Colonic mucosa (tissue), 4 donors: ENCODE measurements at regions of chr14 and their contacts with region 1.

Region 1: DNA sequence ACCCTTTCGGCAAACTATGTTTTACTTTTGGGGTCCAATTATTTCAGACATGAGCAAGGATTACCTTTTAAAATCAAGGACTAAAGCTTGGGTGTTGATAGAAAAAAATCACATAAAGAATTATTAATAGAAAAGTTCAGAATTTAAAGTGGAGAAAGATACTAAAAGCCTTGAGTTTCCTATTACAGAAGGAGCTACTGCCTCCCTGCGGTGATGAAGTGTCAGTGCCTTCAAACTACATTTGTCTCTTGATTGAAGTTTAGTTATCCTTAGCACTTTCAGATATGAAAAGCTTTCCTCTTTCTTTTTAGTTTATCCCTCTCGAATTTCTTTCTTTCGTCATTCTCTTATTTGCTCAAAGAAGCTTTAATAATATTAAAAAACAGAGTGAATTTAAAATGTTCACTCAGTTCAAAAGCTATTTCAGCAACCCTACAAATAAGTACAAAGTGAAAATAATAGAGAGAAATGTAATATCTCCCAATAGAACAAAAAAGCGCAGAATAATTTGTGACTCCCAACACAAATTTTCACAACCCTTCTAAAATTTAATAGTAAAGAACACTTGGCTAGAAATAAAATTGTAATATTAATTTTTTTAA is 87.6 kb downstream of the SEC23A start:
- DNase-seq: no peak
- H3K4me3 ChIP-seq: no peak overlapping the region
- H3K27ac ChIP-seq: no peak overlapping the region
- H3K4me1 ChIP-seq: no peaks in the 10 kb centered on the region
- H3K27me3 ChIP-seq: no peaks in the 10 kb centered on the region
- CTCF ChIP-seq: peak; percentile 74

Region 2: GRCh38 chr14:37796703-37797416 is 1218.6 kb before region 1 on chr14:
- intact Hi-C with region 1: no loop called
- DNase-seq: no peak
- H3K4me3 ChIP-seq: no peak overlapping the region
- H3K27ac ChIP-seq: no peak overlapping the region
- H3K4me1 ChIP-seq: no peaks in the 10 kb centered on the region
- H3K27me3 ChIP-seq: no peaks in the 10 kb centered on the region
- CTCF ChIP-seq: no peak

Region 3: DNA sequence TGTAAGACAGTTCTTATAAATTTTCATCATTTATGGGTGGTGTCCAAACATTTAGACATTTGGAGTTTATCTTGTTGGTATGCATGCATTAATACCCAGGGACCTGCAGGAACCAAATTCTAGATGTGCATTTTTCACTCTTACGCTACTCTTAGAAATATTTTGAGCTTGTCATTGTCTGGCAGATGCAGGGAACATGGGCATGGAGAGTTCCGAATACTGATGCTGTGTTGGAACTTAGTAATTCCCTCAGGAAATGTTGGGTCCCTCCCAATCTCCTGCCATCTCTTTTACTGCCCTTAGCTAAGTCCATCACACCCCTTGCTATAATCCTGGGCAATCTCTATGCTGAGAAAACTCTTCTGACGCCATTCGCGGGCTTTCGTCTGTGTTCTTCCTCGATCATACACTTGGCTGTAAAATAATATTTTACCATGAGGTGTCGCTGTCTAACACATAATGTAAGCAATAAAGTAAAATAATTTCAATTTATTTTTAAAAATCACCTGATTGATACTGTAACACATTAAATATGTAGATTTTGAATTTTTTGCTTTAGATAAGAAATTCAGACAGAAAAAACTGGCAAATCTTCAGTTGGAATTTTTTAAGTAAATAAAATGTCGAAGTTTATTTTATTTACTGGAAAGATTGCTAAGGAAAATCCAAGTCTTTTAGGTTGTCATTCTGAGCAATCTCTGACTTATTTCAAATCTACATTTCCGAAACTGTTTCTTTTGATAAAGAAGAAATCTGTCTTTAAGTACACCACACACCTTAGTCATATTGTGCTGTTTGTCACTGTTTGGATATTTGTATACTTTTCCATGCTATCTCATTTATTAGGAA is 1111.9 kb before region 1 on chr14:
- intact Hi-C with region 1: loop called (anchors 10 kb)
- DNase-seq: no peak
- H3K4me3 ChIP-seq: no peak overlapping the region
- H3K27ac ChIP-seq: no peak overlapping the region
- H3K4me1 ChIP-seq: no peaks in the 10 kb centered on the region
- H3K27me3 ChIP-seq: no peaks in the 10 kb centered on the region
- CTCF ChIP-seq: peak; percentile 53

Region 4: GRCh38 chr14:38721822-38722431 is 293.5 kb before region 1 on chr14:
- intact Hi-C with region 1: loop called (anchors 5 kb)
- DNase-seq: peak; percentile 86
- H3K4me3 ChIP-seq: no peak overlapping the region
- H3K27ac ChIP-seq: no peak overlapping the region
- H3K4me1 ChIP-seq: no peaks in the 10 kb centered on the region
- H3K27me3 ChIP-seq: no peaks in the 10 kb centered on the region
- CTCF ChIP-seq: peak; percentile 73

Region 5: GRCh38 chr14:38873941-38874612 is 141.4 kb before region 1 on chr14:
- intact Hi-C with region 1: loop called (anchors 10 kb)
- DNase-seq: no peak
- H3K4me3 ChIP-seq: no peak overlapping the region
- H3K27ac ChIP-seq: no peak overlapping the region
- H3K4me1 ChIP-seq: no peaks in the 10 kb centered on the region
- H3K27me3 ChIP-seq: no peaks in the 10 kb centered on the region
- CTCF ChIP-seq: no peak

Region 6: GRCh38 chr14:38887696-38888095 is 127.8 kb before region 1 on chr14:
- intact Hi-C with region 1: no loop called
- DNase-seq: no peak
- H3K4me3 ChIP-seq: no peak overlapping the region
- H3K27ac ChIP-seq: no peak overlapping the region
- H3K4me1 ChIP-seq: no peaks in the 10 kb centered on the region
- H3K27me3 ChIP-seq: no peaks in the 10 kb centered on the region
- CTCF ChIP-seq: no peak

Region 7: GRCh38 chr14:38910092-38910491 is 105.4 kb before region 1 on chr14:
- intact Hi-C with region 1: no loop called
- DNase-seq: no peak
- H3K4me3 ChIP-seq: no peak overlapping the region
- H3K27ac ChIP-seq: no peak overlapping the region
- H3K4me1 ChIP-seq: no peaks in the 10 kb centered on the region
- H3K27me3 ChIP-seq: no peaks in the 10 kb centered on the region
- CTCF ChIP-seq: no peak